ENCODE measurements at regions of chr19 and their contacts with region 1.

Region 1: DNA sequence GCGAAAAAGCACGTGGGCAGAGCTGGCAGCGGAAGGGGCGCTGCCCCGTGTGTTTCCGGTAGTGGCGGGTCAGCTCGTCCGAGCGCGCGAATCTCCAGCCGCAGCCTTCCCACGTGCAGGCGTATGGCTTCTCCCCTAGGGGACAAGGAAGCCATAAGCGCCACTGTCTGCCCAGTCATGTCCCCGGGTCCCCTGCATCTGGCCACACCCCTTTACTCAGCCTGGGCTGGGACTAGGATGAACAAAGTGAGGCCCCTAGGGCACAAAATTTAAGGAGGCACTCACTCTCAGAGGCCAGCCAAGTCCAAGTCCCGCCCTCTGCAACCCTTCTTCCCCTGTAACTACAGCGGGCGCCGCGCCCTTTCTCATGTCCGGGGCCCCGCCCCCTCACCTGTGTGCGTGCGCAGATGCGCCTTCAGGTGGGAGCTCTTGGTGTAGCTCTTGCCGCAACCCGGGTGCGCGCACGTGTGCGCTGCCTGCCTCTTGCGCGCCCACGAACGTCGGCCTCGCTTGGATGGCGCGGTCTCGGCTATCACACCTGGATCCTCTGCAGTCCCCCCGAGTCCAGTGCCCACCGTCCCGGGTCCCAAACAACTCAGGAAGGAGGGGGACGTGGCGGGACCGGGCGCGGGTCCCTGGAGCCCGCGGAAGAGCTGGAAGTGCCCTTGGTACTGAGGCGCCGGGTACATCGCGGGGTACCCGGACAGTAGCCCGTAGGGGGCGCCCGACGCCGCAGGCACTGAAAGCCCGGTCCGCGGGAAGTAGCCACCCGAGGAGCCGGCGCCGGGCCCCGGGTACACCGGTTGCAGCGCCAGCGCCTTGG is 1.9 kb downstream of the KLF1 start:
- DNase-seq: no peak
- H3K4me3 ChIP-seq: peak overlapping the region; percentile 47 to 56 (median 52)
- H3K27ac ChIP-seq: peak overlapping the region in 1 of 4 donors; percentile 14
- H3K4me1 ChIP-seq: peaks cover 19 to 36% (median 30%) of the 10 kb centered on the region in 4 donors
- H3K27me3 ChIP-seq: peaks cover 0 to 43% (median 21%) of the 10 kb centered on the region in 4 donors
- CTCF ChIP-seq: peak; percentile 60 to 71 (median 66)
- EP300 ChIP-seq: no peak
- POLR2A ChIP-seq: no peak

Region 2: DNA sequence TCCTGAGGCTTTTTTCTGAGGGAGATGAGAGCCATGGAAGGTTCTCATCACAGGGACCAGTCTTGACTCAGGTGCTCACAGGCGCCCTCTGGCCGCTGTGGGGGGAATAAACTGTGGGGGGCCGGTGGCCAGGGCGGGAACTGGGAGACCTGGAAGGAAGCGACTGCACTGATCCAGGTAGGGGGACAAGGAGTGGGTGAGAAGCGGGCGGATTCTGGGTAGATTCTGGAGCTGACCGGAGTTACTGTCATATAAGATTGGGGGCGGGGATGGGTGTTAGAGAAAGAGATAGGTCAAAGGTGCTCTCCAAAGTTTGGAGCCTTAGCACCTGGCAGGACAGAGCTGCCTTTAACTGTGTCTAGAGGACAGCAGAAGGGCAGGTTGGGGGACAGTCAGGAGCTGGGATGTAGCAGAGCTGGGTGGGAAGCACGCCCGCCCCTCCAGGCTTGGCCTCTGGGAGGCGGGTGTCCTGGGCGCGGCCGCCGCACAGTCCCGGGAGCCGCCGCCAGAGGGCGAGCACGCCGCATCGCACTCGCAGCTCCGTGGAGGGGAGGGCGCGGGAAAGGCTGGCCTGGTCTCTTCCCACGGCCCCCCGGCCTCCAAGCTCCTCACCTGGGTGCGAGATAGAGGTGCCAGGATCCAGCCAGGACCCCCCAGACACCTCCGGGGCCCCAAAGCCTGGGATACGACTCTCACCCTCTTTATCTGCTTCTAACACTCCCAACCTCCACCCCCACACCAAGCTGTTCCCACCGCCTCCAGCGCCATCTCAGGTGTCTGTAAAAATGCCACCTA is 80.1 kb after region 1 on chr19:
- intact Hi-C with region 1: loop called (anchors 1 kb)
- DNase-seq: no peak
- H3K4me3 ChIP-seq: peak overlapping the region; percentile 56 to 61 (median 60)
- H3K27ac ChIP-seq: peak overlapping the region; percentile 65 to 80 (median 76)
- H3K4me1 ChIP-seq: peaks cover 3 to 23% (median 20%) of the 10 kb centered on the region in 4 donors
- H3K27me3 ChIP-seq: no peaks in the 10 kb centered on the region
- CTCF ChIP-seq: peak; percentile 70 to 91 (median 89)
- EP300 ChIP-seq: no peak
- POLR2A ChIP-seq: no peak

Measured in esophagus muscularis mucosa (tissue), 4 donors.